ENCODE measurements at regions of chr14 and their contacts with region 1.

Region 1: DNA sequence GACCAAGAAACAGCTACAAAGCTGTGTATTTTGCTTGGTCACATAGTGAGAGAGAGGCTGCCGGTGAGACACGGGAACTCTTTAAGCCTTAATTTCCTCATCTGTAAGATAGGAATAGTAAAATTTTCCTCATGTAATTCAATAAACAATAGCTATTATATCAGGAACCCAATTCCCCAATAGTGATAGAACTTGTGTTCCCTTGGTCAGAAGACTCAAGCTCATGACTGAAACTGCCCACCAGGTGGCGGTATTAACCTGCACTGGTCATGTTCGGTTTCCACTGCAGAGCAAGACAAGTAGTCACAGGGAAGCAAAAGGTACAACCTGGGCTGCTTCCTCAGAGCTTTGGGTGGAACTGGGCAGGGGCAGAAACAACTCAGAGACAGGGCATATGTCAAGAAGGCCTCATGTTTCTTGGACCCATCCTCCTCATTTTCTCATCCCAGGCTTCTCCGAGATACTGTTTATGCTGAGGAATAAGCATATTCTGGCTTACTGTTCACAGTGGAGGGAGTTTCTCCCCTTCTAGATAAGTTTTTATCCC is 4.2 kb upstream of the AJUBA start:
- DNase-seq: peak; percentile 96
- H3K4me3 Mint-ChIP-seq: no peak overlapping the region
- H3K27ac Mint-ChIP-seq: no peak overlapping the region
- H3K4me1 Mint-ChIP-seq: no peaks in the 10 kb centered on the region
- H3K27me3 Mint-ChIP-seq: no peaks in the 10 kb centered on the region

Region 2: DNA sequence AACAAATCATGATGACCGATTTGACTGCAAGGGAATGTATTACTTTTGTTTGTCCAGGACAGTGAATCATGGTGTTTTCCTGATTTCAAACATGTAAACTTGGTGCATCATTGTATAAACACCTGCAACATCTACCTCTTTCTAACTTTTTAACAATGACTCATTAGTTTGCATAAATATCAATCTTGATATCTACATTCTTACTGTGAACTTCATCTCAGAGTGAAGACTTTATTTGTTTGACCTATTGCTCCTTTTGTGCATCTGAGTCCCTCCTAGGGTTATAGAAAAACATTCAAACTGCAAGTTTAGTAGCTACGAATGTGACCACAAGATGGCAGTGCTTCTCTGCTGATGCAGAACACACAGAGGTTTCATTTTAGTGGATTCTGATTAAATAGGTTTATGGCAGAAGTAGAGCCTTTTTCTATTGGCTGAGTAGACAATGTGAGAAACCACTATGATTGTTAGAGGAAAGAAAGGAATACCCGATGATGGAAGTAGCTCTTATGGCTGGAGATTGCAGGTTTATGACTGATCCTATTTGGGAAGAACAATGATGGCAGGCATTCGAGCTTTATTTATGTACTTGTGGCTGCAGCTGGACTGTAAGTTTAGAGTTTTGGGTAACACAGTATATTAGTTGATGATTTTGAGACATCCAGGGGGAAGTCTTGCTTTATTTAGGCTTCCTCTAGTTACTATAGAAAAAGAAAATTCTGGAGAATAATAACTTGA is 1068.7 kb before region 1 on chr14:
- intact Hi-C with region 1: loop called (anchors 10 kb)
- DNase-seq: peak; percentile 90
- H3K4me3 Mint-ChIP-seq: peak overlapping the region; percentile 76
- H3K27ac Mint-ChIP-seq: peak overlapping the region; percentile 74
- H3K4me1 Mint-ChIP-seq: peaks cover 47% of the 10 kb centered on the region
- H3K27me3 Mint-ChIP-seq: no peaks in the 10 kb centered on the region

Region 3: GRCh38 chr14:22955702-22956569 is 30.6 kb before region 1 on chr14:
- intact Hi-C with region 1: loop called (anchors 2 kb)
- DNase-seq: no peak
- H3K4me3 Mint-ChIP-seq: peak overlapping the region; percentile 95
- H3K27ac Mint-ChIP-seq: peak overlapping the region; percentile 92
- H3K4me1 Mint-ChIP-seq: peaks cover 19% of the 10 kb centered on the region
- H3K27me3 Mint-ChIP-seq: peaks cover 3% of the 10 kb centered on the region

Region 4: GRCh38 chr14:23006544-23007419 is 20.2 kb after region 1 on chr14:
- intact Hi-C with region 1: loop called (anchors 1 kb)
- DNase-seq: peak; percentile 99
- H3K4me3 Mint-ChIP-seq: peak overlapping the region; percentile 92
- H3K27ac Mint-ChIP-seq: peak overlapping the region; percentile 95
- H3K4me1 Mint-ChIP-seq: peaks cover 36% of the 10 kb centered on the region
- H3K27me3 Mint-ChIP-seq: no peaks in the 10 kb centered on the region

Region 5: GRCh38 chr14:23186913-23187654 is 200.5 kb after region 1 on chr14:
- intact Hi-C with region 1: loop called (anchors 10 kb)
- DNase-seq: peak; percentile 70
- H3K4me3 Mint-ChIP-seq: no peak overlapping the region
- H3K27ac Mint-ChIP-seq: no peak overlapping the region
- H3K4me1 Mint-ChIP-seq: no peaks in the 10 kb centered on the region
- H3K27me3 Mint-ChIP-seq: peaks cover 25% of the 10 kb centered on the region

Measured in activated CD4-positive, alpha-beta T cell treated with anti-CD3 and anti-CD28 coated beads, Interleukin-2, amount 10 ng/mL, durations not matched to agents 24 days and 14 days (primary cell).